ENCODE measurements at regions of chr17 and their contacts with region 1.

Region 1: DNA sequence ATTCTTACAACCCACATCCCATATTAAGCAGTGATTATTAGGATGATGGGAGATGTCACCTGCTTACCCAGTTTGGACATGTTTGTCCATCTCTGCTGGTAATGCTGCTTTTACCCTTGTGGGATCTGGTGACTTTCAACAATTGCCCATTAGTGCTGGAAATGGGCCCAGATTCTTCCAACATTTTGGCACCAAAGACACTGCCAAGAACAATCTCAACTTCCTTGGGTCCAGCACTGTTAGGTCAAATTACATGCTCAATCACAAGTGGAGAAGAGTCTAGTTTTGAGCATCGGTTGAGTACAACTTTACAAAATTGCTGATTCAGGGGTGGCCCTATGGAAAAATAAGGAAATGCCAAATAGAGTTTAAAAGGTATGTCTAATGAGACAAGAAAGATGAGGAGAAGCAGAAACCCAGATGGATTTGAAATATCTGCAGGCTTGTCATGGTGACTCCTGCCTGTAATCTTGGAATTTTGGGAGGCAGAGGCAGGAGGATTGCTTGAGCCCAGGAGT is 13.0 kb upstream of the ZFP3 start:
- DNase-seq: no peak
- H3K4me3 ChIP-seq: no peak overlapping the region
- H3K4me3 Mint-ChIP-seq: no peak overlapping the region
- H3K27ac Mint-ChIP-seq: no peak overlapping the region
- H3K4me1 ChIP-seq: no peaks in the 10 kb centered on the region
- H3K4me1 Mint-ChIP-seq: no peaks in the 10 kb centered on the region
- H3K27me3 ChIP-seq: no peaks in the 10 kb centered on the region
- H3K27me3 Mint-ChIP-seq: no peaks in the 10 kb centered on the region
- CTCF ChIP-seq: no peak

Region 2: GRCh38 chr17:4966844-4967538 is 98.3 kb before region 1 on chr17:
- CTCF ChIA-PET with region 1: no interaction called
- POLR2A ChIA-PET with region 1: no interaction called
- intact Hi-C with region 1: no loop called
- DNase-seq: peak; percentile 94 to 97
- H3K4me3 ChIP-seq: peak overlapping the region; percentile 68
- H3K4me3 Mint-ChIP-seq: no peak overlapping the region
- H3K27ac Mint-ChIP-seq: no peak overlapping the region
- H3K4me1 ChIP-seq: peaks cover 4% of the 10 kb centered on the region; the same call in 1 of the 2 replicates
- H3K4me1 Mint-ChIP-seq: no peaks in the 10 kb centered on the region
- H3K27me3 ChIP-seq: no peaks in the 10 kb centered on the region
- H3K27me3 Mint-ChIP-seq: no peaks in the 10 kb centered on the region
- CTCF ChIP-seq: no peak

Region 3: DNA sequence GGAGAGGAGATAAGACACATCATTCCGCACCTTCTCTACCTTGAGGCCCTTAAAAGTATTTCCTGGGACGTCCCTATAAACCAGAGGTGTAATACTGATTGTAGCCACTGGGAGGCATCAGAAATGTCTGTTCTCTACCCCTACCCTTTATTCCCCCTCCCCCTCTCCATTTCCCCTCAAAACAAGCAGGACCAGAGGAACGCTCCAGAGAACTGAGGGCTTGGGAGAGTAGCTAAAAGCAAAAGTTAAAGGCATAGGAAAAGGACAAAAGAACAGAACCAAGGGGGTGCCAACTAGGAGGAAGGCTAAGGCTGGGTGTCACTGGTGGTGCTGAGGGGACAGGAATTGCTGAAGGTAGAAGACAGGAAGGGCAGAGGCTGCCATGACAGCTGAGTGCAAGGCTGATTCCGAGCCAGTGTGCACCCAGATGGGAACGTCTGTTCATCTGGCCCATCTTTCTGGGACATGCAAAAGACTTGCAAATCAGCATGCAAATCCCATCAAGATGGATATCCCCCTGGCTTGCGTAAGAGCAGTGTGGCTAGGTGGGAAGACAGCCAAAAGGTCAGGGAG is 84.6 kb before region 1 on chr17:
- CTCF ChIA-PET with region 1: no interaction called
- POLR2A ChIA-PET with region 1: no interaction called
- intact Hi-C with region 1: loop called (anchors 1 kb)
- DNase-seq: peak in 1 of 2 experiments; percentile 55
- H3K4me3 ChIP-seq: no peak overlapping the region
- H3K4me3 Mint-ChIP-seq: no peak overlapping the region
- H3K27ac Mint-ChIP-seq: no peak overlapping the region
- H3K4me1 ChIP-seq: no peaks in the 10 kb centered on the region
- H3K4me1 Mint-ChIP-seq: peaks cover 8% of the 10 kb centered on the region
- H3K27me3 ChIP-seq: no peaks in the 10 kb centered on the region
- H3K27me3 Mint-ChIP-seq: no peaks in the 10 kb centered on the region
- CTCF ChIP-seq: peak; percentile 35 to 49

Region 4: GRCh38 chr17:5031365-5032082 is 33.8 kb before region 1 on chr17:
- CTCF ChIA-PET with region 1: no interaction called
- POLR2A ChIA-PET with region 1: no interaction called
- intact Hi-C with region 1: loop called (anchors 2 kb)
- DNase-seq: peak; percentile 77 to 79
- H3K4me3 ChIP-seq: peak overlapping the region; percentile 33
- H3K4me3 Mint-ChIP-seq: peak overlapping the region; percentile 69
- H3K27ac Mint-ChIP-seq: no peak overlapping the region
- H3K4me1 ChIP-seq: no peaks in the 10 kb centered on the region
- H3K4me1 Mint-ChIP-seq: no peaks in the 10 kb centered on the region
- H3K27me3 ChIP-seq: no peaks in the 10 kb centered on the region
- H3K27me3 Mint-ChIP-seq: no peaks in the 10 kb centered on the region
- CTCF ChIP-seq: peak; percentile 63 to 68

Region 5: GRCh38 chr17:5122586-5123342 is 57.5 kb after region 1 on chr17:
- CTCF ChIA-PET with region 1: no interaction called
- POLR2A ChIA-PET with region 1: no interaction called
- intact Hi-C with region 1: no loop called
- DNase-seq: peak in 1 of 2 experiments; percentile 7
- H3K4me3 ChIP-seq: peak overlapping the region; percentile 35
- H3K4me3 Mint-ChIP-seq: peak overlapping the region; percentile 63
- H3K27ac Mint-ChIP-seq: no peak overlapping the region
- H3K4me1 ChIP-seq: no peaks in the 10 kb centered on the region
- H3K4me1 Mint-ChIP-seq: no peaks in the 10 kb centered on the region
- H3K27me3 ChIP-seq: no peaks in the 10 kb centered on the region
- H3K27me3 Mint-ChIP-seq: no peaks in the 10 kb centered on the region
- CTCF ChIP-seq: no peak

Measured in Caco-2 (cell line).